ENCODE measurements at regions of chr1 and their contacts with region 1.

Region 1: DNA sequence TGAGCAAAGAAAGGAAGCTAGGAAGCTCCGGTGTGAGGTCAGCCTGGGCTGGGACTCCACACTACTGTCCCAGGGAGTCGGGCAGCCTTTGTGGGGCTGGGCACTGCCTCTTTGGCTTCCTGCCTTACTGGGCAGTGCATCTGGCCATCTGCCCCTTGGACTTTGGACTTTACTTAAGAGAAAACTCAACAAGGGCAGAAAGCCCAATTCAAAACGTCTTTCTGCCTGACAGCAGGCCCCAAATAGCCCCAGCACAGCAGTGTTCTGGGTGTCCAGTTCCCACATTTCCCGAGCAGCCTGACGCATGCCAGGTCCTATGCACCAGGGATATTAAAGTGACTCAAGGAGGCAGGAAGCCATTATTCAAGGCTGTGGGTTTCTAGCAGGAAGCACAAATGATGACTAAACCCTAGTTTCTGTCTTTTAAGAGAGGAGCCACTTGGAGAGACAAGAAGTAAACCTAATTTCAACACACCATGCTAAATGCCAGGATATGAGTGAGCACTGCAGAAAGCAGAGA is 37.9 kb upstream of the EDEM3 start:
- DNase-seq: peak; percentile 88 to 93
- ATAC-seq: peak; percentile 93
- H3K4me3 ChIP-seq: no peak overlapping the region
- H3K27ac ChIP-seq: peak overlapping the region; percentile 58 to 83
- H3K4me1 ChIP-seq: peaks cover 0 to 5% of the 10 kb centered on the region in 2 donors
- H3K27me3 ChIP-seq: no peaks in the 10 kb centered on the region

Region 2: GRCh38 chr1:184754476-184755225 is 37.9 kb before region 1 on chr1 and contains the start of gene EDEM3:
- intact Hi-C with region 1: loop called in 1 of 2 experiments (anchors 2 kb)
- DNase-seq: peak; percentile 98 to 99
- ATAC-seq: peak; percentile 99
- H3K4me3 ChIP-seq: peak within 1 kb of the TSS; percentile 78 to 91
- H3K27ac ChIP-seq: peak within 1 kb of the TSS in 1 of 2 donors; percentile 85
- H3K4me1 ChIP-seq: peaks cover 0 to 1% of the 10 kb centered on the region in 2 donors
- H3K27me3 ChIP-seq: no peaks in the 10 kb centered on the region
- total RNA-seq, gene EDEM3: 39.8 to 54.8 TPM

Region 3: DNA sequence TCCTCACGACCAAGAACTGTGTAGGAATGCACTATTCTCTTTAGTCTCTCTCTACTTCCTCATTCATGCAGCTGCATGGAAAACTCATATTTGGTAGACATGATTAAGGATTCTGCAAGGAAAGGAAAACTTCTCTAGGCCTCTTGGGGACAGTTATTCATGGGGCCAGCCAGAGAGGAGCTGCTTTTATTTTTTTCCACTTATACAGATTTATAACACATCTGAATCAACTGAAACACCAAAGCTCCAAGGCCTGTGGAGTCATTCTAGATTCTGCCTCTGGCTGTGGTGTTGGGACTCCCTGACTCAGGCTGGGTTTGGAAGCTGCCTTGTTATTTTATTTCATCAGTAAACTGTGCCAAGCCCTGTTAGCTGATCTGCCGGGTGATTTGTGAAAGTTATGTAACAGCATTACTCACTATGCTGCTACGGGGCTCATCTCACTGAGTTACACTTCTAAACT is 46.0 kb after region 1 on chr1:
- intact Hi-C with region 1: no loop called
- DNase-seq: peak in 1 of 2 donors; percentile 80
- ATAC-seq: peak; percentile 95
- H3K4me3 ChIP-seq: no peak overlapping the region
- H3K27ac ChIP-seq: peak overlapping the region; percentile 90
- H3K4me1 ChIP-seq: peaks cover 6 to 11% of the 10 kb centered on the region in 2 donors
- H3K27me3 ChIP-seq: no peaks in the 10 kb centered on the region

Measured in aorta (tissue), 5 donors.